ENCODE measurements at regions of chr1 and their contacts with region 1.

Region 1: GRCh38 chr1:185694081-185694480 is 40.1 kb upstream of the HMCN1 start:
- DNase-seq: peak; percentile 30
- H3K4me3 ChIP-seq: peak overlapping the region in 2 of 4 donors; percentile 12 to 31
- H3K27ac ChIP-seq: peak overlapping the region in 3 of 4 donors; percentile 15 to 48 (median 44)
- H3K4me1 ChIP-seq: peaks cover 0 to 15% (median 5%) of the 10 kb centered on the region in 4 donors
- H3K27me3 ChIP-seq: no peaks in the 10 kb centered on the region
- CTCF ChIP-seq: no peak
- EP300 ChIP-seq: no peak
- POLR2A ChIP-seq: no peak

Region 2: DNA sequence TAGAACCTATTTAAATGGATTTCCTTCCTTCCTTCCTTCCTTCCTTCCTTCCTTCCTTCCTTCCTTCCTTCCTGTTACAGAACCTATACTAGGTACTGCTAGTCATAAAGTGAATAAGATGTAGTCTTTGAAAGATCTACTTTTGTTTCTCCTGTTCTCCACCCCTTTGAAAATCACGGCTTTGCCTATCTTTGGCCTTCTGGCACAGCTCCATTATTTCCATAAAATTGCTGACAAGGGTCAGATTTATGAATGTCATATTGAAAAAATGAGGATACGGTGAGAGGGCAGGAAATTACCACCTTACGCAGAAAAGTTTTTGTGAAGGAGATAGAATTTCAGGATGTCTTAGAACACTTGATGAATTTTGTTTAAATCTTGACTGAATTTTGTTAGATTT is 22.0 kb after region 1 on chr1:
- in situ Hi-C with region 1: no loop called
- intact Hi-C with region 1: no loop called
- DNase-seq: no peak
- H3K4me3 ChIP-seq: no peak overlapping the region
- H3K27ac ChIP-seq: no peak overlapping the region
- H3K4me1 ChIP-seq: no peaks in the 10 kb centered on the region
- H3K27me3 ChIP-seq: peaks cover 9% of the 10 kb centered on the region
- CTCF ChIP-seq: no peak
- EP300 ChIP-seq: no peak
- POLR2A ChIP-seq: no peak

Region 3: DNA sequence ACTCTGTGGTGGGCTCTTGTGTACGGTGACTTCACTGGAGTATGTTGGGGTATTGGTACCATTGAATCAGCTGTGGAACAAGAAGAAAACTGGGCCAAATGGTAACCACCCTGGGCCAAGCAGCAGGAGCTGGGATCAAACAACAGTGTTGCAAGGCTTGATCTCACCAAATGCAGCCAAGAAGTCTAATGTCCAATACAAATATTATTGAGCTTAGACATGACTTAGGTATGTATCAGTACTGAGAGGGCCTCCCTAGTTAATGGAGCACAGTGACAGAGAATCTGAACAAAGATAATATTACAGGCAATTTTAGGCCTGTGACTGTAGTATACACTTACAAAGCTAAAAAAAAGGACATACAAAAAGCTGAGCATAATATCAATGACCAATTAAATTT is 1739.5 kb after region 1 on chr1:
- in situ Hi-C with region 1: no loop called
- intact Hi-C with region 1: loop called (anchors 10 kb)
- DNase-seq: no peak
- H3K4me3 ChIP-seq: no peak overlapping the region
- H3K27ac ChIP-seq: no peak overlapping the region
- H3K4me1 ChIP-seq: no peaks in the 10 kb centered on the region
- H3K27me3 ChIP-seq: no peaks in the 10 kb centered on the region
- CTCF ChIP-seq: no peak
- EP300 ChIP-seq: no peak
- POLR2A ChIP-seq: no peak

Measured in transverse colon (tissue), 4 donors.